ENCODE measurements at regions of chr13 and their contacts with region 1.

Region 1: GRCh38 chr13:90867336-90867683 is 480.2 kb upstream of the MIR17HG start:
- DNase-seq: peak; percentile 75
- ATAC-seq: peak; percentile 89
- H3K4me3 ChIP-seq: 0 out of 6 replicates have a peak overlapping the region, but pooled peaks of 1 of the 3 experiments have one; percentile 17
- H3K27ac ChIP-seq: peak overlapping the region; percentile 81
- H3K4me1 ChIP-seq: peaks cover 29% of the 10 kb centered on the region
- H3K27me3 ChIP-seq: no peaks in the 10 kb centered on the region
- CTCF ChIP-seq: peak; percentile 81
- EP300 ChIP-seq: no peak
- POLR2A ChIP-seq: no peak
- RAD21 ChIP-seq: peak; percentile 52

Region 2: GRCh38 chr13:89361909-89362308 is 1505.4 kb before region 1 on chr13:
- CTCF ChIA-PET with region 1: no interaction called
- POLR2A ChIA-PET with region 1: no interaction called
- in situ Hi-C with region 1: no loop called
- intact Hi-C with region 1: loop called (anchors 5 kb)
- DNase-seq: no peak
- ATAC-seq: no peak
- H3K4me3 ChIP-seq: no peak overlapping the region
- H3K27ac ChIP-seq: no peak overlapping the region
- H3K4me1 ChIP-seq: no peaks in the 10 kb centered on the region
- H3K27me3 ChIP-seq: no peaks in the 10 kb centered on the region; a peak in 1 of 5 replicates
- CTCF ChIP-seq: no peak
- EP300 ChIP-seq: no peak
- POLR2A ChIP-seq: no peak
- RAD21 ChIP-seq: no peak

Region 3: GRCh38 chr13:89695343-89696257 is 1171.7 kb before region 1 on chr13:
- CTCF ChIA-PET with region 1: no interaction called
- POLR2A ChIA-PET with region 1: no interaction called
- in situ Hi-C with region 1: no loop called
- intact Hi-C with region 1: loop called (anchors 5 kb)
- DNase-seq: peak; percentile 9
- ATAC-seq: peak; percentile 77
- H3K4me3 ChIP-seq: no peak overlapping the region
- H3K27ac ChIP-seq: no peak overlapping the region
- H3K4me1 ChIP-seq: no peaks in the 10 kb centered on the region
- H3K27me3 ChIP-seq: no peaks in the 10 kb centered on the region
- CTCF ChIP-seq: peak; percentile 70
- EP300 ChIP-seq: no peak
- POLR2A ChIP-seq: no peak
- RAD21 ChIP-seq: no peak

Region 4: DNA sequence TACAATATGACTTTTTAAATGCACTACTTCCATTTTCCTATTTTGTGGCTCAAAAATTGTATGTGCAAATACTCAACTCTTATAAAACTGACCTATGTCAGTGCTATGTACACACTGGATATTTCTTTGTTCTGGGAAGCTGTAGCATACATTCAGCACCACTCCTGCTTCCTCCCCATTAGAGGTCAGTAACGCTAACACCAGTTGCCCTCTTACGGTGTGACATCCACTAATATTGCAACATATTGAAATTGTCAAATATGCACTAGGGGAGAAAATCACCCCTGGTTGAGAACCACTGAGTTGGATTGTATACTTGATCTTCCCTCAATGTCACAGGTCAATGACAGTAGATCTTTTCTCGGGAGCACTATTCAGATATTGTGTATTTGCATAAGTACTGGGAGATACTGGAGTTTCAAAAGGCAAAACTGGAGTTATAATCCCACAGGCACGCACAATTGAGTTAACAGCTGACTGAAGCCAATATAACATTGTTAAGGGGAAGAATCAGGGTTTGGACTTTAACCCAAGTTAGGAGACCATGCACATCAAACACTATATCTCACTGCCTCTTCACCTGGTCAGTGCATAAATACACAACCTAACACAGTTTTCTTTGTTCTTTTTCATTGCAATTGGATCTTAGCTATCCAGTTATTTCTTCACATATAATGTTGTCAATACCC is 796.3 kb before region 1 on chr13:
- CTCF ChIA-PET with region 1: no interaction called
- POLR2A ChIA-PET with region 1: no interaction called
- in situ Hi-C with region 1: no loop called
- intact Hi-C with region 1: loop called (anchors 1 kb)
- DNase-seq: peak; percentile 71
- ATAC-seq: peak; percentile 92
- H3K4me3 ChIP-seq: no peak overlapping the region
- H3K27ac ChIP-seq: peak overlapping the region; percentile 16
- H3K4me1 ChIP-seq: peaks cover 12% of the 10 kb centered on the region
- H3K27me3 ChIP-seq: no peaks in the 10 kb centered on the region
- CTCF ChIP-seq: no peak
- EP300 ChIP-seq: no peak; a peak in 1 of 4 replicates
- POLR2A ChIP-seq: no peak
- RAD21 ChIP-seq: no peak

Region 5: DNA sequence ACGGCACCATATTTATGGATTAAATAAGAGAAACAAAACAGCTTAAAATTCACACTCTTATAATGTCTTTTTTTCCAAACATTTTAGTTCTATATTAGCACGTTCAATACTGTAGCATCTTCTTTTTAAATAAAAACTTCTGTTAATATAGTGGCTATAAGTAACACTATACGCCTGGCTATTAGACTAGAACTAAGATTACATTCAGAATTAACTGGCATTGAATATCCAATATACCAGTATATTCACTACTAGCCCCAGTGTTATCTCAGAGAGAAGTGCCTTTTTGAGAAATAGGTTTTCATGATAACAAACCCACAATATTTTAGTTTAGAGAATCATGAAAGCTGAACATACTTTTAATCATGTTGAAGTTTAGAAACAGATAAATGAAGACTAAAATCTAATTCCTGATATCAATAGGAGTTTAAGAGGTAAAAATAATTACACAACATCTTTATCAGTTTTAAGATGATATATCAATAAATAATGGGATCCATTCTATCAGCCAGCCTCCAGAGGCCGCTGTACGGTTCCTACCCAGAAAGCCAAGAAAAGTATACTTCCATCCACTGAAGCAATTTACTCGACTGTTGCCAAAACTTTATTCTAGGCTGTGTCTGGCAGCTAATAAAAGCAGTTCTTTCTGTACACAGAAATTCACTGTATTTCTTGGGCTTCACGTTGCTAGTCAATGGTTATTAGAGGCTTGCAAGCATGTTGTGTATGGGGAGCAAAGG is 633.2 kb before region 1 on chr13:
- CTCF ChIA-PET with region 1: no interaction called
- POLR2A ChIA-PET with region 1: no interaction called
- in situ Hi-C with region 1: no loop called
- intact Hi-C with region 1: loop called (anchors 5 kb)
- DNase-seq: no peak
- ATAC-seq: no peak
- H3K4me3 ChIP-seq: no peak overlapping the region
- H3K27ac ChIP-seq: no peak overlapping the region
- H3K4me1 ChIP-seq: no peaks in the 10 kb centered on the region
- H3K27me3 ChIP-seq: no peaks in the 10 kb centered on the region
- CTCF ChIP-seq: no peak
- EP300 ChIP-seq: no peak
- POLR2A ChIP-seq: no peak
- RAD21 ChIP-seq: no peak

Region 6: GRCh38 chr13:90420683-90421082 is 446.6 kb before region 1 on chr13:
- CTCF ChIA-PET with region 1: no interaction called
- POLR2A ChIA-PET with region 1: no interaction called
- in situ Hi-C with region 1: no loop called
- intact Hi-C with region 1: loop called (anchors 5 kb)
- DNase-seq: no peak
- ATAC-seq: no peak
- H3K4me3 ChIP-seq: no peak overlapping the region
- H3K27ac ChIP-seq: no peak overlapping the region
- H3K4me1 ChIP-seq: no peaks in the 10 kb centered on the region
- H3K27me3 ChIP-seq: no peaks in the 10 kb centered on the region
- CTCF ChIP-seq: no peak
- EP300 ChIP-seq: no peak
- POLR2A ChIP-seq: no peak
- RAD21 ChIP-seq: no peak

Region 7: DNA sequence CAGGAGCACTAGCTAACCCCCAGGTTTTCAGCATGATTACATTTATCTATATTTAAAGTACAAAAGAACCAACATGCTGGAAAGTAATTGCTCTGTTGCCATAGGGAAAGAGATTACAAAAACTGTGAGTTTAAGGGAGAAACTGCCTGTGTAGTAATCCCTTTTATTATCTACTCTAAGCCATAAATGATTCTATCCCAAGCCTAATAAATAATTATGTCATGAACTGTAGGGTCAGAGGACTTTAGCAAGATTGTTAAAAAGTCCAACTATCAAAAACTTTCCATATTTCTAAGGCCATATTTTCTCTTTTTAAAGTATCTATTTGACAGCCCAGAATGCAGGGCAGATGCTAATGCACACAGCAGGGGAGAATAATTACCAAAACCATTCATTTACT is 93.6 kb before region 1 on chr13:
- CTCF ChIA-PET with region 1: no interaction called
- POLR2A ChIA-PET with region 1: no interaction called
- in situ Hi-C with region 1: no loop called
- intact Hi-C with region 1: no loop called
- DNase-seq: no peak
- ATAC-seq: no peak
- H3K4me3 ChIP-seq: no peak overlapping the region
- H3K27ac ChIP-seq: no peak overlapping the region
- H3K4me1 ChIP-seq: no peaks in the 10 kb centered on the region
- H3K27me3 ChIP-seq: no peaks in the 10 kb centered on the region
- CTCF ChIP-seq: no peak
- EP300 ChIP-seq: no peak
- POLR2A ChIP-seq: no peak
- RAD21 ChIP-seq: no peak

Measured in HepG2 (cell line).